ENCODE measurements at regions of chr4 and their contacts with region 1.

Region 1: DNA sequence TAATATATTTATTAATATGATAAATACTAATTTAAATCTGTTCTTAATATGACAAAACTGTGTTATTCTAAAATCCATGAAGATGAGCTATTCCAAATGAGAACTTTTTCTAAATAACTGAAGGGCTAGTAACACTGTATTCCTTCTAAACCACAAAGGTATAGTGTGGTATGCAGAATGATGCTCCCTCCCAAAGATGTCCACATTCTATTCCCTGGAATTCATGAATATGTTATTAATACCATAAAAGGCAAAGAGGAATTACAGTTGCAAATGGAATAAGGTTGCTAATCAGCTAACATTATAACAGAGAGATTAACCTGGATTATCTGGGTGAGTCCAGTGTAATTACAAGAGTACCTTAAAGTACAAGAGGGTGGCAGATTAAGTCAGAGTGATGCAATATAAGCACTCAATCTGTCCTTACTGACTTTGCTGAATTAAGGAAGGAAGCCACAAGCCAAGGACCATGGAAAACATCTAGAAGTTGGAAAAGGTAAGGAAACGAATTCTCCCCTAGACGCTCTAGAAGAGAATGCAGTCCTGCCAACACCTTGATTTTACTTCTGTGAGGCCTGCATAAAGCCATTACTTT is 20.7 kb upstream of the MAB21L2 start:
- DNase-seq: no peak
- ATAC-seq: no peak
- H3K4me3 ChIP-seq: no peak overlapping the region
- H3K27ac ChIP-seq: no peak overlapping the region
- H3K4me1 ChIP-seq: no peaks in the 10 kb centered on the region
- H3K27me3 ChIP-seq: no peaks in the 10 kb centered on the region
- CTCF ChIP-seq: no peak
- EP300 ChIP-seq: no peak
- POLR2A ChIP-seq: no peak
- RAD21 ChIP-seq: no peak

Region 2: DNA sequence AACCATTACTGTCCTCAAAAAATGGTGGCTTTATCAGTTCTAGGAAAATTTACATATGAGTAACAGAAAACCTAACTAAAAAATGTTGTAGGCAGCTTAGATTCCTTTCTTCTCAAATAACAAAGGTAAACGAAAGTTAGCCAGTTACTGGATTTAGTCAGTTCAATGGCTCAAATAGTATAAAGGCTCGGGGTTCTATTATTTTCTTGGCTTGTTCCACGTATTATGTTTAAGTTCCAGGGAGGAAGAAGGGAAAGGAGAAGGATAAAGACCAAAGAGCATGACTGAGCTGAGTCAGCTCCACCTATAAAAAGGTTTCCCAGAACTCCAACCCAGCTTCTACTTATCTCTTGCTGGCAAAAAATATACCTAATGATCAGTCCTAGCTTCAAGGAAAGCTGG is 20.3 kb before region 1 on chr4:
- CTCF ChIA-PET with region 1: no interaction called
- POLR2A ChIA-PET with region 1: no interaction called
- RAD21 ChIA-PET with region 1: no interaction called
- SMC1A ChIA-PET with region 1: interaction called, 7 read pairs
- in situ Hi-C with region 1: no loop called
- intact Hi-C with region 1: loop called (anchors 1 kb)
- DNase-seq: no peak
- ATAC-seq: no peak
- H3K4me3 ChIP-seq: no peak overlapping the region
- H3K27ac ChIP-seq: no peak overlapping the region
- H3K4me1 ChIP-seq: no peaks in the 10 kb centered on the region
- H3K27me3 ChIP-seq: no peaks in the 10 kb centered on the region
- CTCF ChIP-seq: no peak
- EP300 ChIP-seq: no peak
- POLR2A ChIP-seq: no peak
- RAD21 ChIP-seq: no peak

Region 3: GRCh38 chr4:150647008-150647407 is 85.8 kb after region 1 on chr4:
- CTCF ChIA-PET with region 1: no interaction called
- POLR2A ChIA-PET with region 1: no interaction called
- RAD21 ChIA-PET with region 1: no interaction called
- SMC1A ChIA-PET with region 1: no interaction called
- in situ Hi-C with region 1: no loop called
- intact Hi-C with region 1: no loop called
- DNase-seq: no peak
- ATAC-seq: no peak
- H3K4me3 ChIP-seq: no peak overlapping the region
- H3K27ac ChIP-seq: no peak overlapping the region
- H3K4me1 ChIP-seq: no peaks in the 10 kb centered on the region
- H3K27me3 ChIP-seq: no peaks in the 10 kb centered on the region
- CTCF ChIP-seq: no peak
- EP300 ChIP-seq: no peak
- POLR2A ChIP-seq: no peak
- RAD21 ChIP-seq: no peak